ENCODE measurements at regions of chr10 and their contacts with region 1.

Region 1: DNA sequence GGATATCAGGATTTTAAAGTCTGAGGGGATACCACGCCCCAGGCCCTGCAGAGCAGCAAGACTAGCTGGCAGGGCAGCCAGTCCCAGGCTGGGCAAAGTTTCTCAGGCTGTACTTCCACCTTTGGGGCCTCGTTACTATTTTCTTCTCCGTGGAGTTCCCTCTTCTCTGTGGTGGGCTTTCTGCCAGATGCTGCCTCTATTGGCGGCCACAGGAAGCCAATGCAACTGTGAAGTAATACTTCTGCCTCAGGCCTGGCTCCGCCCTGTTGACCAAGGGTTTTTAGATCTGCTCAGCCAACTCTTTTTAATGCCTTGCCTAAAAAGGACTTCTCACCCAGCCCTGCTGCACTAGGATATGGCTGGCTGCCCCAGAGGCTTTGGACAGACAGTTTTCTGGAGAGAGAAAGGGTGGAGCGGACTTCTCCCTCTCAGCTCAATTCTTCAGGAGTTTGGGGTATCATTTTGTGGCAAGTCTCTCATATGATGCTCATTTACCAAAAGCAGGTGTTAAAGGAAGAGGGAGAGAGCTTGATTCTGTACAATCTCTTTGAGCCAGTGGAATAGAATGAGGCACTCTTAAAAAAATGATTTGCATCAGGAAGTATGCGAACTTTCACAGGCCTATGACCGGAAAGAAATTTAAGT is 67.4 kb downstream of the HHEX start:
- DNase-seq: peak; percentile 74 to 96
- H3K4me3 ChIP-seq: peak overlapping the region in 1 of 2 donors; percentile 49
- H3K27ac ChIP-seq: peak overlapping the region; percentile 88 to 89
- H3K4me1 ChIP-seq: peaks cover 8 to 13% of the 10 kb centered on the region in 2 donors
- H3K27me3 ChIP-seq: no peaks in the 10 kb centered on the region
- CTCF ChIP-seq: peak in 1 of 3 experiments; percentile 23

Region 2: GRCh38 chr10:92592761-92593618 is 164.2 kb before region 1 on chr10 and contains the start of gene KIF11:
- intact Hi-C with region 1: loop called (anchors 5 kb)
- DNase-seq: peak; percentile 94 to 99
- H3K4me3 ChIP-seq: peak within 1 kb of the TSS; percentile 58 to 70
- H3K27ac ChIP-seq: peak within 1 kb of the TSS; percentile 92 to 96
- H3K4me1 ChIP-seq: peaks cover 4 to 5% of the 10 kb centered on the region in 2 donors
- H3K27me3 ChIP-seq: no peaks in the 10 kb centered on the region
- CTCF ChIP-seq: no peak
- total RNA-seq, gene KIF11: not detected

Region 3: DNA sequence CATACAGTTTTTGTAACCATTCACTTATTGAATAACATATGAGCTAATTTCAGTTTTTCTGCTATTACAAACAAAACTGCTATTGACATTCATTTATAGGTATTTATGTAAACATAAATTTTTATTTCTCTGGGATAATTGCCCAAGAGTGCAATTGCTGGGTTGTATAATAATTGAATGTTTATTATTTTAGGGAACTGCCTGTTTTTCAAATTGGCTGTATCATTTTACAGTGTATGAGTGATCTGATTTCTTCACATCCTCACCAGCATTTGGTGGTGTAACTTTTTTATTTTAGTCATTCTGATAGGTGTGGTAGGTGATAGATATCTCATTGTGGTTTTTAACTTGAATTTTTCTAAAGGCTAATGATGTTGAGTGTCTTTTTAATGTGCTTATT is 137.8 kb before region 1 on chr10:
- intact Hi-C with region 1: no loop called
- DNase-seq: no peak
- H3K4me3 ChIP-seq: no peak overlapping the region
- H3K27ac ChIP-seq: no peak overlapping the region
- H3K4me1 ChIP-seq: no peaks in the 10 kb centered on the region
- H3K27me3 ChIP-seq: no peaks in the 10 kb centered on the region
- CTCF ChIP-seq: no peak

Region 4: GRCh38 chr10:92689663-92690210 is 67.5 kb before region 1 on chr10 and contains the start of gene HHEX:
- intact Hi-C with region 1: loop called (anchors 1 kb)
- DNase-seq: peak in 1 of 2 donors; percentile 80
- H3K4me3 ChIP-seq: peak within 1 kb of the TSS; percentile 70 to 90
- H3K27ac ChIP-seq: peak within 1 kb of the TSS; percentile 54 to 74
- H3K4me1 ChIP-seq: no peaks in the 10 kb centered on the region
- H3K27me3 ChIP-seq: no peaks in the 10 kb centered on the region
- CTCF ChIP-seq: no peak
- total RNA-seq, gene HHEX: 18.5 TPM

Region 5: DNA sequence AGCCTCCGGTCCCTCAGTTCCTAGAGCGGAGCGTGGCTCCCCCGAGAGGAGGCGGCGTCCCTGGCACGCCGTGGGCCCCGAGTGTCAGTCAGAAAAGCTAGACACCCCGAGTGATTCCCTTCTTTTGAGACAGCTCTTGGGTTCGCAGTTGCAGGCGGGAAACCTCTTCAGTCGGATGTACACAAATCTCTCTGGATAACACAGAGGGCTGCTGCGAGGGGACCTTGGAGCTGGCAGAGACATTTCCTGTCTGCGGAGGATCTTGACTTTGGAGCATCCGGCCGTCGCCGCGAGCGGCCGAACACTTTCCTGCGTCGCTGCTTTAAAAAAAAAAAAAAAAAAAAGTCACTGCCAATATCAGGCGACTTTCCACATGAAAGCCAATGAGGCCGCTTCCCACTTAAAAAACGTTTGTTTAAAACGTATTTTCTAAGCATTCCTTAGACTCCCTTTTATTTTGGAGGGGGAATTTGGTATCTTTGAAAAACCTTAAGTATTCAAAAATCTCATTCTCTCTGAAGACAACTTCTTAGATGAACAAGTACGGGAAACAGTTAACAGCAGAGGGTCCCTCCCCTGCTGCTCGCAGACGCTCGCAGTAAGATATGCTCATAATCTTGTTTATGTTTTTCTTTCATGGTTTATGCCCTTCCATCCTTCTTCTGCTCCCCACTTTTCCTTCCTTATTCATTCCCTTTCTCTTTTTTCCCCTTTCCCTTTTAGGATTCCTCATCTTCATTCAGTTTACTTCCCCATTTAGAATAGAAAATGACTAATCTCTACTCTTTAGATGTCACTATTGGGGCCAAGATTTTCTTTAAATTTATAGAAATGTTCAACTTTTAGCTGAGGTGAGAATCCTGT is 57.4 kb before region 1 on chr10:
- intact Hi-C with region 1: loop called (anchors 2 kb)
- DNase-seq: no peak
- H3K4me3 ChIP-seq: peak overlapping the region; percentile 49 to 66
- H3K27ac ChIP-seq: peak overlapping the region; percentile 51 to 64
- H3K4me1 ChIP-seq: peaks cover 0 to 4% of the 10 kb centered on the region in 2 donors
- H3K27me3 ChIP-seq: no peaks in the 10 kb centered on the region
- CTCF ChIP-seq: no peak

Region 6: GRCh38 chr10:92848441-92849233 is 91.4 kb after region 1 on chr10 and contains the start of gene EXOC6:
- intact Hi-C with region 1: loop called (anchors 1 kb)
- DNase-seq: peak in 1 of 2 donors; percentile 80
- H3K4me3 ChIP-seq: peak within 1 kb of the TSS; percentile 93 to 94
- H3K27ac ChIP-seq: peak within 1 kb of the TSS; percentile 52 to 85
- H3K4me1 ChIP-seq: peaks cover 0 to 6% of the 10 kb centered on the region in 2 donors
- H3K27me3 ChIP-seq: no peaks in the 10 kb centered on the region
- CTCF ChIP-seq: peak in 1 of 3 experiments; percentile 13
- total RNA-seq, gene EXOC6: 12.2 TPM